PC-9 (cell line): ENCODE measurements at regions of chr6 and their contacts with region 1.

Region 1: DNA sequence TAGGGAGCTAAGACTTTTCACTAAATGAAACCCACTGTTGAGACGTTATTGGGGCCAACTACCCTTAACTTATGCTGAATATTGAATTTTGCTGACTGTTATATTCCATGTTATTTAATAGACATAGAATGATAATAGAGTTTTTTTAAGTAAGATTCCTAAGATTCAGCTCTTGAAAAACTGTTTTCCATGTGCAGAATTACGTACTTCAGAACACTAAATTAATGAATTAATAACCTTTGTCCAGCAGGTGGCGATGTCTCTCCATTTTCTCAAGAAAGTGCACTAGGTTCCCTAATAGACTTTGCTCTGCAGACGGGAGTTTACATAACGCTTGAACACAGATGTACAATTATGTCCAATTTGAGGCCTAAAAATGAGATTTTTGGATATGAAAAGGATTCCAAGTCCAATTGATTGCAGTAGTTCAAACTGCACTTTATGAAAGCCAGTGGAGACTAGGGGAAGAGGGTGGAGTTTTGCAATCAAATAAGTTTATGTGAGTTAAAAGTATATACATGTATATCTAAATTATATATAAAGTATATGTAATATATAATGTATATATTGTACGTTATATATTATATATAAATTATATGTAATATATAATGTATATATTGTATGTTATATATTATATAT is 282.1 kb downstream of the UST start:
- DNase-seq: peak; percentile 24 to 74
- H3K4me3 ChIP-seq: no peak overlapping the region
- H3K27ac ChIP-seq: no peak overlapping the region
- H3K4me1 ChIP-seq: peaks cover 42% of the 10 kb centered on the region
- H3K27me3 ChIP-seq: no peaks in the 10 kb centered on the region
- CTCF ChIP-seq: peak; percentile 85

Region 2: GRCh38 chr6:148578245-148578732 is 450.6 kb before region 1 on chr6:
- CTCF ChIA-PET with region 1: interaction called, 6 read pairs
- POLR2A ChIA-PET with region 1: no interaction called
- intact Hi-C with region 1: loop called (anchors 1 kb)
- DNase-seq: peak; percentile 37 to 56
- H3K4me3 ChIP-seq: no peak overlapping the region
- H3K27ac ChIP-seq: no peak overlapping the region
- H3K4me1 ChIP-seq: no peaks in the 10 kb centered on the region
- H3K27me3 ChIP-seq: peaks cover 5% of the 10 kb centered on the region; the same call in 1 of the 2 replicates
- CTCF ChIP-seq: peak; percentile 82

Region 3: DNA sequence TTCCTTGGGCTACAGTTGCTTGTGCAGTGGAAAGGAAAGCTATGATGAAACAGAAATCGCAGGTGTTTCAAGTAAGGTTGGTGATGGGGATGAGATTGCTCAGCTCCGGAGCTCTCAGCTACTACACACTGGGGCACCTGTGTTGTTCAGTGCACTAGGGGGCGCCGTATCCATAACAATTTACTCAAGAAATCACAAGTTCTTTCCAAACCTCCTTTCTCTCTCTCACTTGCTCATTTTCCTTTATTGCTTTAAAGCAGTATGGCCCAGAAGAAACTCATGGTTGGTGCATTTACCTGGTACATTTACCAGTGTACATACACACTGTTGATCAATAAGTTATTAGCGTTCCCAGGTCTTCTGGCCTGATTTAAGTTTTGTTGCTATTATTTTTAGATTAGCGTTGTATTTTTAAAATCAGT is 53.4 kb after region 1 on chr6:
- CTCF ChIA-PET with region 1: no interaction called
- POLR2A ChIA-PET with region 1: interaction called, 4 read pairs
- intact Hi-C with region 1: loop called (anchors 2 kb)
- DNase-seq: peak; percentile 49 to 65
- H3K4me3 ChIP-seq: no peak overlapping the region
- H3K27ac ChIP-seq: no peak overlapping the region
- H3K4me1 ChIP-seq: peaks cover 30% of the 10 kb centered on the region
- H3K27me3 ChIP-seq: no peaks in the 10 kb centered on the region
- CTCF ChIP-seq: peak; percentile 81

Region 4: GRCh38 chr6:149316798-149317655 is 288.1 kb after region 1 on chr6:
- CTCF ChIA-PET with region 1: no interaction called
- POLR2A ChIA-PET with region 1: no interaction called
- intact Hi-C with region 1: loop called (anchors 2 kb)
- DNase-seq: peak; percentile 74 to 78
- H3K4me3 ChIP-seq: peak overlapping the region; percentile 98
- H3K27ac ChIP-seq: peak overlapping the region; percentile 75
- H3K4me1 ChIP-seq: peaks cover 34% of the 10 kb centered on the region
- H3K27me3 ChIP-seq: no peaks in the 10 kb centered on the region
- CTCF ChIP-seq: no peak

Region 5: DNA sequence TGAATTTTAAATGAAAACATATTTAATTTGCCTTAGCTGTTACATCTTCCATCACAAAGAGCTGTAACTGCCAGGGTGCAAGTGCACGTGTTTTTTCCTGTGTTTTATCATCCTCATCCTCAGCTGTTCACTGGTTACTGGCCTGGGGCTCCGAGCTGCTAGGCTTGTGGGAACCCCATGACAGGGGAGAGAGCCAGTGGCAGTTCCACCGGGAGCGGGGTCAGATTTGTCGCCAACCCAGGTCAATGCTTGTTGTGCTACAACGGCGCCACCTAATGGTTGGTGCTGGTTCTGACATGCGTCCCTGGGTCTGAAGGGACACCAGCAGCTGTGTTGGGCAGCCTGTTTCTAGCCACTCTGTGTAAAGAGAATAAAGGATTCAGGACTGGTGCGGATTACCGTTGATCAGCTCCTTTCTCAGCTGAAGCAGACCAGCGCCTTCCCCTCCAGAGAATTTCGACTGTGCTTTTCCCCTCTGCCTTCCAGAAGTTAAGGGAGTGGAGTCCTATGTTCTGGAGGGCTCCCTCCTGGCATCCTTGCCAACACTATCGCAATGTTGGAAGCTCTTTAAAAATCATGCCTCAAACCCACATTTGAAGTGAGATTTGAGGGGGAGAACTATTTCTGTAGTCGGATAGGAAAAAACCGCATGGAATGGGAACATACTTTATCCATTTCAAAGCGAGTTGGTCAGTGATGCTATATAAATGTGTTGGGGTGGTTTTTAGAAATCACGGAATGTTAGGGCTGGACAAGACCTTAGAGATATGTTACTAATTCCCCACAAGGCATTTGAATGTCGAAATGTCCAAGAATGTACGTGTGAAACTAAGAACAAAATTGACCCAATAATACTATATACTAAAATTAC is 403.3 kb after region 1 on chr6:
- CTCF ChIA-PET with region 1: interaction called, 4 read pairs
- POLR2A ChIA-PET with region 1: no interaction called
- intact Hi-C with region 1: loop called (anchors 1 kb)
- DNase-seq: peak; percentile 52 to 79
- H3K4me3 ChIP-seq: no peak overlapping the region
- H3K27ac ChIP-seq: no peak overlapping the region
- H3K4me1 ChIP-seq: no peaks in the 10 kb centered on the region; the same call in 1 of the 2 replicates
- H3K27me3 ChIP-seq: no peaks in the 10 kb centered on the region
- CTCF ChIP-seq: peak; percentile 95